Mammary epithelial cell (primary cell): ENCODE measurements at regions of chr3 and their contacts with region 1.

Region 1: GRCh38 chr3:126475413-126476114 is at the start of gene ZXDC:
- DNase-seq: peak; percentile 93
- H3K4me3 ChIP-seq: peak within 1 kb of the TSS; percentile 78 to 83 (median 80)
- H3K27ac ChIP-seq: peak within 1 kb of the TSS; percentile 69
- H3K4me1 ChIP-seq: peaks cover 34% of the 10 kb centered on the region
- H3K27me3 ChIP-seq: no peaks in the 10 kb centered on the region
- CTCF ChIP-seq: peak; percentile 9 to 60
- total RNA-seq, gene ZXDC: 27.2 to 30.3 TPM

Region 2: GRCh38 chr3:126419886-126420786 is 55.4 kb before region 1 on chr3:
- CTCF ChIA-PET with region 1: no interaction called
- dilution Hi-C with region 1: no loop called
- in situ Hi-C with region 1: no loop called
- intact Hi-C with region 1: no loop called
- DNase-seq: no peak
- H3K4me3 ChIP-seq: no peak overlapping the region
- H3K27ac ChIP-seq: no peak overlapping the region
- H3K4me1 ChIP-seq: peaks cover 5% of the 10 kb centered on the region
- H3K27me3 ChIP-seq: no peaks in the 10 kb centered on the region
- CTCF ChIP-seq: no peak

Region 3: GRCh38 chr3:126460381-126460780 is 15.2 kb before region 1 on chr3:
- CTCF ChIA-PET with region 1: interaction called, 11 read pairs
- dilution Hi-C with region 1: no loop called
- in situ Hi-C with region 1: no loop called
- intact Hi-C with region 1: no loop called
- DNase-seq: no peak
- H3K4me3 ChIP-seq: no peak overlapping the region
- H3K27ac ChIP-seq: no peak overlapping the region
- H3K4me1 ChIP-seq: no peaks in the 10 kb centered on the region
- H3K27me3 ChIP-seq: no peaks in the 10 kb centered on the region
- CTCF ChIP-seq: no peak

Region 4: GRCh38 chr3:126487151-126487771 is 11.7 kb after region 1 on chr3:
- CTCF ChIA-PET with region 1: no interaction called
- dilution Hi-C with region 1: no loop called
- in situ Hi-C with region 1: no loop called
- intact Hi-C with region 1: loop called (anchors 1 kb)
- DNase-seq: peak; percentile 60
- H3K4me3 ChIP-seq: no peak overlapping the region
- H3K27ac ChIP-seq: no peak overlapping the region
- H3K4me1 ChIP-seq: peaks cover 14% of the 10 kb centered on the region
- H3K27me3 ChIP-seq: no peaks in the 10 kb centered on the region
- CTCF ChIP-seq: peak; percentile 3 to 33